Endothelial cell of umbilical vein (primary cell): ENCODE measurements at regions of chr22 and their contacts with region 1.

Region 1: DNA sequence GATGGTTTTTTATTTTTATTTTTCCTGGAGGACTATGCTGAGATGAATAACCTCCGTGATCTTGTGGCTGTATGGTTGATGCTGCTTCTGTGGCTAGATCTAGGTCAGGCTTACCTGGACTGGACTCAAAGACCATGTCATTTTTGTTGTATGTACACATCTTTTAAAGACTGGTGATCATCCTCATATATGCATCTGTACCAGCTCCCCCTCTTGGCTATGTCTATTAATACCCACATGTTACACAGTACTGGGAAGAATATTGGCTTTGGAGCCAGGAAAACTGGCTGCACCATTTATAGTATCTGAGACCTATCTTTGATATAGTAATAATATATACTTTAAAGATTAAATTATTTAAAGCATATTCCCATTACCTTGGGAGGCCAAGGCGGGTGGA is 18.4 kb upstream of the PITPNB start:
- DNase-seq: no peak
- H3K4me3 ChIP-seq: no peak overlapping the region
- H3K27ac ChIP-seq: no peak overlapping the region
- H3K4me1 ChIP-seq: no peaks in the 10 kb centered on the region
- H3K27me3 ChIP-seq: no peaks in the 10 kb centered on the region
- CTCF ChIP-seq: peak in 1 of 2 donors; percentile 2
- POLR2A ChIP-seq: no peak

Region 2: GRCh38 chr22:27905653-27906052 is 31.8 kb before region 1 on chr22:
- CTCF ChIA-PET with region 1: no interaction called
- POLR2A ChIA-PET with region 1: no interaction called
- dilution Hi-C with region 1: no loop called
- intact Hi-C with region 1: no loop called
- DNase-seq: no peak
- H3K4me3 ChIP-seq: no peak overlapping the region
- H3K27ac ChIP-seq: no peak overlapping the region
- H3K4me1 ChIP-seq: no peaks in the 10 kb centered on the region
- H3K27me3 ChIP-seq: no peaks in the 10 kb centered on the region
- CTCF ChIP-seq: no peak
- POLR2A ChIP-seq: no peak

Region 3: GRCh38 chr22:28180804-28181731 is 243.6 kb after region 1 on chr22:
- CTCF ChIA-PET with region 1: no interaction called
- POLR2A ChIA-PET with region 1: interaction called, 10 read pairs
- dilution Hi-C with region 1: no loop called
- intact Hi-C with region 1: no loop called
- DNase-seq: peak; percentile 26
- H3K4me3 ChIP-seq: no peak overlapping the region
- H3K27ac ChIP-seq: no peak overlapping the region
- H3K4me1 ChIP-seq: peaks cover 2% of the 10 kb centered on the region
- H3K27me3 ChIP-seq: no peaks in the 10 kb centered on the region
- CTCF ChIP-seq: no peak
- POLR2A ChIP-seq: no peak